ENCODE measurements at regions of chr15 and their contacts with region 1.

Region 1: GRCh38 chr15:90886041-90886614 is 1.8 kb downstream of the FES start:
- ATAC-seq: peak; percentile 57 to 79 (median 70)
- H3K4me3 ChIP-seq: no peak overlapping the region
- H3K27ac ChIP-seq: no peak overlapping the region
- H3K4me1 ChIP-seq: peaks cover 9 to 28% of the 10 kb centered on the region in 2 donors

Region 2: GRCh38 chr15:90320061-90320884 is 565.9 kb before region 1 on chr15:
- in situ Hi-C with region 1: loop called in 4 of 9 experiments (anchors 25 kb)
- ATAC-seq: peak; percentile 77 to 97 (median 94)
- H3K4me3 ChIP-seq: no peak overlapping the region
- H3K27ac ChIP-seq: no peak overlapping the region
- H3K4me1 ChIP-seq: peaks cover 7 to 12% of the 10 kb centered on the region in 2 donors

Region 3: DNA sequence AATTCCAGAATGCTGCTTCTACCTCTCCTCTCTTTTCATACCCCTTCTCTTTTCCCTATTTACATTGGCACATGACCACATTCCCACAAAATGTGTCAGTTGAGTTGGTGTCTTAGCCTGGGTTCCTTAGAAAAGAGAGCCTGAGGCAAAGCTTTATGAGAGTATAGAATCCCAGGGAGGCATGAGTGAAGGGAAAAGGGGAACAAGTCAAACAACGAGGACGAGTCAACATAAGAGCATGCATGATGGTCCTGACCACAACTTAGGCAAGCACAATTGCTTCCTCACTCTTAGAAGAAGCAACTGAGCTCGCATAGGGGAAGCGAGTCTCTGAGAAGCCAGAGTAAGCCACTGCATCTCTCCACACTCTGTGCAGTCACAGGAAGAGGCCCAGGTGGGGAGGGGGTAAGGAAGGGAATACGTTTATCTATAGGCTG is 549.4 kb before region 1 on chr15:
- in situ Hi-C with region 1: loop called in 2 of 9 experiments (anchors 25 kb)
- ATAC-seq: peak in 1 of 8 experiments; percentile 33
- H3K4me3 ChIP-seq: no peak overlapping the region
- H3K27ac ChIP-seq: no peak overlapping the region
- H3K4me1 ChIP-seq: peaks cover 0 to 8% of the 10 kb centered on the region in 2 donors

Region 4: DNA sequence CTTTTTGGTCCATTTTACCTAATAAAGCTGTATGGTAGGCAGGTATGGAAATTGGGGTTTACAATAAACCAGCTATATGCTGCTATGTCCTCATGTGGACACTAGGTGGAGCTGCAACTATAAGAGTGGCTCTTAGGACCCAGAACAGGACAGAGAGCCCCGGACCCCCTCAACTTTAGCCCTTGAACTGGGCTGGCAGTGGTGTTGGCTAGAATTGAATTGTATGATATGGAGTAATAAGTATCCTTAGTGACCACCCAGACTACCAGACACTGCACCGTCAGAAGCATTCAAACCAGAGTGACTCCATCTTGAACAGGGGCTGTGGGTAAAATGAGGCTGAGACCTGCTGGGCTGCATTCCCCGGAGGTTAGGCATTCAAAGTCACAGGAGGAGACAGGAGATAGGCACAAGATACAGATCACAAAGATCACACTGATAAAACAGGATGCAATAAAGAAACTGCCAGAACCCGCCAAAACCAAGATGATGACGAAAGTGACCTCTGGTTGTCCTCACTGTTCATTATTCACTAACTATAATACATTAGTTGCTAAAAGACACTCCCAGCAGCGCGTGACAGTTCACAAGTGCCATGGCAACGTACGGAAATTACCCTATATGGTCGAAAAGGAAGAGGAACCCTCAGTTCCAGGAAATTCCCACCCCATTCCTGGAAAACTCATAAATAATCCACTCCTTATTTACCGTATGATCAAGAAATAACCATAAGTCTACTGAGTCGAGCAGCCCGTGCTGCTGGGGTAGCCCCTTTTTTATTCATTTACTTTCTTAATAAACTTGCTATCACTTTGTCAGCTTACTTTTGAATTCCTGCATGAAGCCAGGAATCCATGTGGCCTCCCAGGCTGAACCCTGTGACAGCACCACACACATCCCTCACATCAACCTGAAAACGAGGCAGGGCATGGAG is 237.7 kb before region 1 on chr15:
- in situ Hi-C with region 1: loop called in 7 of 9 experiments (anchors 10 to 25 kb)
- ATAC-seq: peak; percentile 77 to 89 (median 82)
- H3K4me3 ChIP-seq: no peak overlapping the region
- H3K27ac ChIP-seq: no peak overlapping the region
- H3K4me1 ChIP-seq: peaks cover 6 to 7% of the 10 kb centered on the region in 2 donors

Region 5: GRCh38 chr15:90660195-90660998 is 225.7 kb before region 1 on chr15:
- in situ Hi-C with region 1: loop called in 3 of 9 experiments (anchors 25 kb)
- ATAC-seq: peak; percentile 63 to 92 (median 79)
- H3K4me3 ChIP-seq: no peak overlapping the region
- H3K27ac ChIP-seq: no peak overlapping the region
- H3K4me1 ChIP-seq: peaks cover 0 to 2% of the 10 kb centered on the region in 2 donors

Region 6: GRCh38 chr15:91104111-91104510 is 218.0 kb after region 1 on chr15:
- in situ Hi-C with region 1: no loop called
- ATAC-seq: no peak
- H3K4me3 ChIP-seq: no peak overlapping the region
- H3K27ac ChIP-seq: no peak overlapping the region
- H3K4me1 ChIP-seq: peaks cover 5 to 6% of the 10 kb centered on the region in 2 donors